Ovary (tissue), 10 donors: ENCODE measurements at regions of chr1 and their contacts with region 1.

Region 1: GRCh38 chr1:7667625-7668218 is 103.4 kb upstream of the VAMP3 start:
- DNase-seq: peak; percentile 78 to 94 (median 87)
- H3K4me3 ChIP-seq: no peak overlapping the region
- H3K27ac ChIP-seq: no peak overlapping the region
- H3K4me1 ChIP-seq: no peaks in the 10 kb centered on the region
- H3K27me3 ChIP-seq: no peaks in the 10 kb centered on the region
- CTCF ChIP-seq: peak; percentile 91 to 99 (median 97)
- EP300 ChIP-seq: no peak
- POLR2A ChIP-seq: no peak

Region 2: GRCh38 chr1:7752512-7753417 is 85.0 kb after region 1 on chr1:
- intact Hi-C with region 1: loop called (anchors 2 to 5 kb)
- DNase-seq: peak; percentile 56 to 75 (median 65)
- H3K4me3 ChIP-seq: peak overlapping the region; percentile 19
- H3K27ac ChIP-seq: no peak overlapping the region
- H3K4me1 ChIP-seq: peaks cover 1% of the 10 kb centered on the region
- H3K27me3 ChIP-seq: no peaks in the 10 kb centered on the region
- CTCF ChIP-seq: peak; percentile 57 to 80 (median 59)
- EP300 ChIP-seq: no peak
- POLR2A ChIP-seq: no peak

Region 3: DNA sequence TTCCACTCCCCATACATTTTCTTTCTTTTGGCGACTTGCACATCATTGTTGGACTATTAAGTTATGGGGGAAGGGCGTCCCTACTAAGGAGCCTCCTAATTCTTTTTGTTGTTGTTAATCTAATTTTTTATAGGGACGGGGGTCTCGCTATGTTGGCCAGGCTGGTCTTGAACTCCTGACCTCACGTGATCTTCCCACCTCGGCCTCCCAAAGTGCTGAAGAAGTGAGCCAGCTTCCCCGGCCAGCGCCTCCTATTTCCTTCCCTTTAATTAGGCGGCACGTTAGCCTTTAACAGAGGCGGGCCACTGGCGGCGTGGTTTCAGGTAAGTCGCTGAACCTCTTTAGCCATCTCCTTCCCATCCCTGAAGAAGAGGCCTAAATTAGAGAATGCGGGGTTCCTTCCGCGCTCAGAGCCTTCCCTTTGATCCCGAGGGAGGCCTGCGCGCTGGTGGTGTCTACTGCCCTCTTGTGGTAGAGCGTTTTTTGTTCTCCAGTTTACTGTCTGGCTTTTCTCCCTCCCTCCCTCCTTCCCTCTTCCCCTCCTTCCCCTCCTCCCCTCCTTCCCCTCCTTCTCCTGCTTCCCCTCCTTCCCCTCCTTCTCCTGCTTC is 234.9 kb after region 1 on chr1:
- intact Hi-C with region 1: loop called in 2 of 4 experiments (anchors 5 kb)
- DNase-seq: peak; percentile 15 to 56 (median 29)
- H3K4me3 ChIP-seq: no peak overlapping the region
- H3K27ac ChIP-seq: no peak overlapping the region
- H3K4me1 ChIP-seq: peaks cover 2% of the 10 kb centered on the region
- H3K27me3 ChIP-seq: no peaks in the 10 kb centered on the region
- CTCF ChIP-seq: peak in 1 of 3 donors; percentile 35
- EP300 ChIP-seq: no peak
- POLR2A ChIP-seq: no peak

Region 4: GRCh38 chr1:7912743-7913557 is 245.2 kb after region 1 on chr1:
- intact Hi-C with region 1: no loop called
- DNase-seq: no peak
- H3K4me3 ChIP-seq: no peak overlapping the region
- H3K27ac ChIP-seq: no peak overlapping the region
- H3K4me1 ChIP-seq: no peaks in the 10 kb centered on the region
- H3K27me3 ChIP-seq: no peaks in the 10 kb centered on the region
- CTCF ChIP-seq: no peak
- EP300 ChIP-seq: no peak
- POLR2A ChIP-seq: no peak